ENCODE measurements at regions of chr6 and their contacts with region 1.

Region 1: GRCh38 chr6:20564777-20565176 is 30.5 kb downstream of the CDKAL1 start:
- DNase-seq: no peak
- ATAC-seq: no peak
- H3K4me3 ChIP-seq: no peak overlapping the region
- H3K27ac ChIP-seq: no peak overlapping the region
- H3K4me1 ChIP-seq: no peaks in the 10 kb centered on the region
- H3K27me3 ChIP-seq: no peaks in the 10 kb centered on the region
- CTCF ChIP-seq: no peak

Region 2: GRCh38 chr6:20438462-20439070 is 126.2 kb before region 1 on chr6:
- intact Hi-C with region 1: no loop called
- DNase-seq: no peak
- ATAC-seq: no peak
- H3K4me3 ChIP-seq: no peak overlapping the region
- H3K27ac ChIP-seq: no peak overlapping the region
- H3K4me1 ChIP-seq: no peaks in the 10 kb centered on the region
- H3K27me3 ChIP-seq: no peaks in the 10 kb centered on the region
- CTCF ChIP-seq: no peak

Region 3: GRCh38 chr6:21593412-21593926 is 1028.7 kb after region 1 on chr6 and contains the start of gene SOX4:
- intact Hi-C with region 1: loop called in 1 of 3 experiments (anchors 5 kb)
- DNase-seq: peak; percentile 87 to 97 (median 92)
- ATAC-seq: peak; percentile 69 to 79 (median 74)
- H3K4me3 ChIP-seq: peak within 1 kb of the TSS; percentile 62 to 74 (median 70)
- H3K27ac ChIP-seq: peak within 1 kb of the TSS; percentile 77 to 95 (median 89)
- H3K4me1 ChIP-seq: peaks cover 0 to 4% (median 3%) of the 10 kb centered on the region in 3 donors
- H3K27me3 ChIP-seq: no peaks in the 10 kb centered on the region
- CTCF ChIP-seq: no peak
- total RNA-seq, gene SOX4: 9.7 to 61.9 (median 13.3) TPM